A673 (cell line): ENCODE measurements at regions of chr1 and their contacts with region 1.

Region 1: DNA sequence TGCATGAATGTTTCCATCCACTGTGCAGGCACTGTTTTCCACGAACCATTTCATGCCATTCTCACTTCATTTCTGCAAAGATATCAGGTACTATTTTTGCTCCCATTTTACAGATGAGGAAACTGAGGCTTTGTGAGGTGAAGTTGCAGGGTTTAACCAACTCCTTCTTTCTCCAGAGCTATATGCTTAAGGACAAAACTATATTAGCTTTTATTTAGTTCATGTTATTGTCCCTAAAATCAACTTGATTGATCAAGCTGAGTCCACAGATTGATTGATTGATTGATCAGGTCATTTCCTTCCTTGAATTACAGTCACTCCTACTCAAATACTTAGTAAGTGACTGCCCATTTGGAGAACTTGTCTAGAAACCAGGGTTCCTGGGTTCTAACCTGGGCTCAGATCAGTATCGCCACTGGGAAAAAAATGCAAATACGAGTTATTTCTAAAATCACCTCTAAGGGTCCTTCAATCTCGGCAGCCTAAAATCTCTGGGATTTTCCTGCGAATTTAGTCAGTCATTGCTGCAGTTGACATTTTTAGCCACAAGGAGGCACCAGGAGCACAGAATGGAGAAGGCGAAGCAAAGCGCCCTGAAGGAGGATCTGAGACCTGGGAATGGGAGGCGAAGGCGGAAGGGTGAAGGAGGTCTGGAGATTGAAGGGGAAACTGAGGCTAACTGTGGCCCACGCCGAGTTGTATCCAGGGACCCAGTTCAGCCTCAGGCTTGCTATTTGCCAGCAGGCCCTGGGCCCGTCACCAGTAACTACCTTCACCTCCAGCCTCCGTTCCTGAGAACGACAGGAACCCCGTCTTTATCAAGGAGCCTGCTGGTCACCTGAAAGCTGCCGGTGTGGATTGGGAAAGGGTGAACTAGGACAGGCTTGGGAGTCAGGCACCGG is 14.3 kb upstream of the MUL1 start:
- DNase-seq: peak; percentile 86
- H3K4me3 ChIP-seq: no peak overlapping the region
- H3K27ac ChIP-seq: no peak overlapping the region
- H3K4me1 ChIP-seq: no peaks in the 10 kb centered on the region
- H3K27me3 ChIP-seq: peaks cover 15% of the 10 kb centered on the region
- CTCF ChIP-seq: peak; percentile 88

Region 2: GRCh38 chr1:20640183-20640597 is 118.0 kb after region 1 on chr1:
- CTCF ChIA-PET with region 1: no interaction called
- POLR2A ChIA-PET with region 1: no interaction called
- intact Hi-C with region 1: loop called (anchors 1 kb)
- DNase-seq: peak; percentile 65
- H3K4me3 ChIP-seq: no peak overlapping the region
- H3K27ac ChIP-seq: no peak overlapping the region
- H3K4me1 ChIP-seq: no peaks in the 10 kb centered on the region
- H3K27me3 ChIP-seq: no peaks in the 10 kb centered on the region
- CTCF ChIP-seq: peak; percentile 85

Region 3: GRCh38 chr1:20775700-20776099 is 253.5 kb after region 1 on chr1:
- CTCF ChIA-PET with region 1: no interaction called
- POLR2A ChIA-PET with region 1: no interaction called
- intact Hi-C with region 1: no loop called
- DNase-seq: no peak
- H3K4me3 ChIP-seq: no peak overlapping the region
- H3K27ac ChIP-seq: no peak overlapping the region
- H3K4me1 ChIP-seq: no peaks in the 10 kb centered on the region
- H3K27me3 ChIP-seq: no peaks in the 10 kb centered on the region
- CTCF ChIP-seq: no peak